ENCODE measurements at regions of chr12 and their contacts with region 1.

Region 1: GRCh38 chr12:11581179-11581755 is 68.2 kb upstream of the ETV6 start:
- DNase-seq: peak; percentile 20
- H3K4me3 Mint-ChIP-seq: peak overlapping the region; percentile 59
- H3K27ac Mint-ChIP-seq: peak overlapping the region; percentile 80
- H3K4me1 Mint-ChIP-seq: peaks cover 24% of the 10 kb centered on the region
- H3K27me3 Mint-ChIP-seq: peaks cover 7% of the 10 kb centered on the region

Region 2: GRCh38 chr12:11273449-11273848 is 307.8 kb before region 1 on chr12:
- intact Hi-C with region 1: no loop called
- DNase-seq: no peak
- H3K4me3 Mint-ChIP-seq: no peak overlapping the region
- H3K27ac Mint-ChIP-seq: no peak overlapping the region
- H3K4me1 Mint-ChIP-seq: no peaks in the 10 kb centered on the region
- H3K27me3 Mint-ChIP-seq: peaks cover 2% of the 10 kb centered on the region

Region 3: DNA sequence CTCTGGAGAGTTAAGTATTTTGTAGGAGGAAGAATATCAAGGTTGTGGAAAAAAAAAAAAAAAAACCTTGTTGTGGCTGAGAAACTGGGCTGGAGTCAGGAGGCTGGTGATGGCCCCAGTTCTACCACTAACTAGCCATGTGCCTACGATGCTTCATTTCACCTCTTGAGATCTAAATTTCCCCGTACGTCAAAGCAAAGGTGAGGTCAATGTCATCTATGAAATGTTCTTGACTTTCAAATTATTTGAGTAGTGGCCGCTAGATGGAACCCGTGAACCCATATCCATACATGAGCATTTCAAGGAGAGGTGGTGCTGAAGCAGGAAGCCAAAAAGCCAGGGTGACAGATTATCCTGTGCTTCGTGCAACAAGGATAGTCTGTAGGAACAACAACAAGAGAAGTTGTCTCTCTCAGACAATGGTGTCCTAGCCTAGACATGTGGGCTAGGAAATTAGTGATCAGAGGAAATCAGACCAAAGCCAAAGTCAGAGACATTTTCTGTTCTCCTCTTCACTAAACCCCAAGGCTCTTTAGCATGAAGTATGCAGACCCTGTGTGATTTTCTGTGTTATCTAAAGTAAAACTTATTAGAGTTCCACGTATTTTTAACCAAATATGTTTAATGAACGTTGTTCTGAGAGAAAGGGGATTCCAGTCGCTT is 27.3 kb before region 1 on chr12:
- intact Hi-C with region 1: loop called (anchors 2 kb)
- DNase-seq: peak; percentile 33
- H3K4me3 Mint-ChIP-seq: peak overlapping the region; percentile 45
- H3K27ac Mint-ChIP-seq: no peak overlapping the region
- H3K4me1 Mint-ChIP-seq: peaks cover 27% of the 10 kb centered on the region
- H3K27me3 Mint-ChIP-seq: peaks cover 8% of the 10 kb centered on the region

Region 4: DNA sequence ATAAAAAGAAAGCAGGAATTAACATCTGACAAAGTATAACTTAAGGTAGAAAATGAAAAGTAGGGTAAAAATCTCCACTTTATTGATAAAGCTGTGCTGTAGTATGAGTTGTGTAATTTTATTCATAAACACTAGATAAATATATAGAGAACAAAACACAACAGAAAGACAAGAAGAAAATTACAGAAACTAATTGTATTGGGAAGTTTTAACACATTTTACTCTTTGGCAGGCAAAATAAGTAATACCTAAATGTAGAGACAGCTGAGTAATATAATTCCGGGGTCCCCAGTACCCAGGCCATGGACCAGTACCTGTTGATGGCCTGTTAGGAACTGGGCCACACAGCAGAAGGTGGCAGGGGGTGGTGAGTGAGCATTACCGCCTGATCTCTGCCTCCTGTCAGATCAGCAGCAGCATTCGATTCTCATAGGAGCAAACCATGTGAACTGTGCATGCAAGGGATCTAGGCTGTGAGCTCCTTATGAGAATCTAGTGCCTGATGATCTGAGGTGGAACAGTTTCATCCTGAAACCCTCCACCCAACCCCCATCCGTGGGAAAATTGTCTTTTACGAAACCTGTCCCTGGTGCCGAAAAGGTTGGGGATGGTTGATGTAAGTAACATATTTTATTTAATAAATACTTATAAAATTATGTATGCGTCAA is 16.1 kb before region 1 on chr12:
- intact Hi-C with region 1: no loop called
- DNase-seq: no peak
- H3K4me3 Mint-ChIP-seq: no peak overlapping the region
- H3K27ac Mint-ChIP-seq: no peak overlapping the region
- H3K4me1 Mint-ChIP-seq: no peaks in the 10 kb centered on the region
- H3K27me3 Mint-ChIP-seq: peaks cover under 1% of the 10 kb centered on the region

Region 5: GRCh38 chr12:11730299-11731041 is 149.2 kb after region 1 on chr12:
- intact Hi-C with region 1: loop called (anchors 2 kb)
- DNase-seq: no peak
- H3K4me3 Mint-ChIP-seq: peak overlapping the region; percentile 66
- H3K27ac Mint-ChIP-seq: peak overlapping the region; percentile 86
- H3K4me1 Mint-ChIP-seq: peaks cover 93% of the 10 kb centered on the region
- H3K27me3 Mint-ChIP-seq: no peaks in the 10 kb centered on the region

Region 6: GRCh38 chr12:11827091-11828061 is 246.1 kb after region 1 on chr12:
- intact Hi-C with region 1: loop called (anchors 5 kb)
- DNase-seq: no peak
- H3K4me3 Mint-ChIP-seq: no peak overlapping the region
- H3K27ac Mint-ChIP-seq: peak overlapping the region; percentile 72
- H3K4me1 Mint-ChIP-seq: peaks cover 55% of the 10 kb centered on the region
- H3K27me3 Mint-ChIP-seq: no peaks in the 10 kb centered on the region

Region 7: GRCh38 chr12:11981121-11981733 is 400.0 kb after region 1 on chr12:
- intact Hi-C with region 1: loop called (anchors 1 kb)
- DNase-seq: peak; percentile 73
- H3K4me3 Mint-ChIP-seq: peak overlapping the region; percentile 36
- H3K27ac Mint-ChIP-seq: peak overlapping the region; percentile 96
- H3K4me1 Mint-ChIP-seq: peaks cover 62% of the 10 kb centered on the region
- H3K27me3 Mint-ChIP-seq: no peaks in the 10 kb centered on the region

Region 8: GRCh38 chr12:12327802-12328201 is 746.5 kb after region 1 on chr12:
- intact Hi-C with region 1: loop called (anchors 1 kb)
- DNase-seq: no peak
- H3K4me3 Mint-ChIP-seq: no peak overlapping the region
- H3K27ac Mint-ChIP-seq: no peak overlapping the region
- H3K4me1 Mint-ChIP-seq: peaks cover 13% of the 10 kb centered on the region
- H3K27me3 Mint-ChIP-seq: peaks cover 2% of the 10 kb centered on the region

Region 9: GRCh38 chr12:12334367-12335040 is 753.2 kb after region 1 on chr12:
- intact Hi-C with region 1: loop called (anchors 1 kb)
- DNase-seq: peak; percentile 38
- H3K4me3 Mint-ChIP-seq: no peak overlapping the region
- H3K27ac Mint-ChIP-seq: no peak overlapping the region
- H3K4me1 Mint-ChIP-seq: peaks cover 44% of the 10 kb centered on the region
- H3K27me3 Mint-ChIP-seq: no peaks in the 10 kb centered on the region

Measured in activated T-helper 1 cell treated with anti-CD3 and anti-CD28 coated beads, Interleukin-12 subunit alpha, Interleukin-12 subunit beta, Interleukin-2, Interleukin-4 antibody, amounts not matched to agents 30 ng/mL and 10 ng/mL and 1 ng/mL, durations not matched to agents 14 hours and 24 hours and 36 hours (primary cell).